ENCODE measurements at regions of chr14 and their contacts with region 1.

Region 1: GRCh38 chr14:90060312-90060964 is 1.4 kb upstream of the KCNK13 start:
- DNase-seq: peak; percentile 51
- ATAC-seq: peak; percentile 91
- H3K4me3 ChIP-seq: peak overlapping the region; percentile 74
- H3K27ac ChIP-seq: no peak overlapping the region
- H3K4me1 ChIP-seq: peaks cover 4% of the 10 kb centered on the region; the same call in 1 of the 2 replicates
- H3K27me3 ChIP-seq: peaks cover 60% of the 10 kb centered on the region
- CTCF ChIP-seq: peak; percentile 57
- POLR2A ChIP-seq: no peak
- RAD21 ChIP-seq: peak; percentile 50

Region 2: GRCh38 chr14:88727057-88727456 is 1333.4 kb before region 1 on chr14:
- CTCF ChIA-PET with region 1: no interaction called
- POLR2A ChIA-PET with region 1: no interaction called
- dilution Hi-C with region 1: no loop called
- in situ Hi-C with region 1: no loop called
- intact Hi-C with region 1: no loop called
- DNase-seq: peak; percentile 1
- ATAC-seq: no peak
- H3K4me3 ChIP-seq: no peak overlapping the region
- H3K27ac ChIP-seq: no peak overlapping the region
- H3K4me1 ChIP-seq: no peaks in the 10 kb centered on the region
- H3K27me3 ChIP-seq: no peaks in the 10 kb centered on the region
- CTCF ChIP-seq: no peak
- POLR2A ChIP-seq: no peak
- RAD21 ChIP-seq: no peak

Region 3: DNA sequence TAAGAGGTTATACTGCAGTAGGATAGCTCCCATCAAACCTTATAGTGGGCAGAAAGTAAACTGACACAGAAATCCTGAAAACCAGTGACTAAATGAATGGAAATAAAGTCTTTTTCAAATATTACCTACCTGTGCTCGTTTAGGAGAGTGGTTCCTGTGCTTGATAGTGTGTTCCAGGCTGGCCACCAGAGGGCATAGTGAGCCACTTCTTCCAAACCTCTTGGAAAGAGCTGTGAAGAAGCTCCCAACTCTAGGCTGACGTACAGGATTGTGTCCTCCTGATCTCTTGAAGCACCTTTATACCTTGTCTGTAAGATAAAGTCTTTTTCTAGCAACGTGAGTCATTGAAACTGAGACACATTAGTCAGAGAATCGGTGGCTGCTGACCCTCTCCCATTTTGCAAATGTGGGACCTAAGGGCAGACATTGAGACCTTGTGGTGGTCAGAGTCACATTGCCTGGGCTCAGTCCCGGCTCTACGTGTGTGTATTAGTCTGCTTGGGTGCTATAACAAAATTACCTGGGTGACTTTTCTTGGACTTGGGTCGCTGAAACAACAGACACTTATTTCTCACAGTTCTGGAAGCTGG is 87.1 kb before region 1 on chr14:
- CTCF ChIA-PET with region 1: interaction called, 5 read pairs
- POLR2A ChIA-PET with region 1: no interaction called
- dilution Hi-C with region 1: no loop called
- in situ Hi-C with region 1: no loop called
- intact Hi-C with region 1: loop called (anchors 1 kb)
- DNase-seq: peak; percentile 69
- ATAC-seq: peak; percentile 94
- H3K4me3 ChIP-seq: no peak overlapping the region
- H3K27ac ChIP-seq: no peak overlapping the region
- H3K4me1 ChIP-seq: no peaks in the 10 kb centered on the region
- H3K27me3 ChIP-seq: no peaks in the 10 kb centered on the region
- CTCF ChIP-seq: peak; percentile 73
- POLR2A ChIP-seq: no peak
- RAD21 ChIP-seq: peak; percentile 70

Region 4: DNA sequence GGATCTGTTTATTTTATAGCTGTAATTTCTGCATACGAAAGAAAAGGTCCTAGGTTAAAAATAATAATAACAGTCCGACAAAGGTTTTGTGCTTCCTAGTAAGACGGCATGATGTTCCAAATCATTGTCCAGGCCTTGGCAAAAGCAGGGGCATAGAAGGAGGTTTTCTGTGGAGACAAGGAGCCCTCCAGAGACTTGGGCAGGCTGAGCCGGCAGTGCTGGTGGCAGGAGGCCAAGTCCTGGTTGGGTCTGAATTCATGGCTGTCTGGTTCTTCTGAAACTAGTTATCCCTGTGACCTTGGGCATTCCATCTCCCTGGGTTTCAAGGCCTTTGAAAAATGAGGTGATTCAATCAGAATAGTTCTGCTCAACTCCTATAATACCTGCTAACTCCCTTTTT is 45.3 kb after region 1 on chr14:
- CTCF ChIA-PET with region 1: no interaction called
- POLR2A ChIA-PET with region 1: no interaction called
- dilution Hi-C with region 1: no loop called
- in situ Hi-C with region 1: no loop called
- intact Hi-C with region 1: loop called (anchors 2 kb)
- DNase-seq: no peak
- ATAC-seq: no peak
- H3K4me3 ChIP-seq: no peak overlapping the region
- H3K27ac ChIP-seq: no peak overlapping the region
- H3K4me1 ChIP-seq: no peaks in the 10 kb centered on the region
- H3K27me3 ChIP-seq: peaks cover 7% of the 10 kb centered on the region; the same call in 1 of the 2 replicates
- CTCF ChIP-seq: no peak
- POLR2A ChIP-seq: no peak
- RAD21 ChIP-seq: no peak